ENCODE measurements at regions of chr12 and their contacts with region 1.

Region 1: DNA sequence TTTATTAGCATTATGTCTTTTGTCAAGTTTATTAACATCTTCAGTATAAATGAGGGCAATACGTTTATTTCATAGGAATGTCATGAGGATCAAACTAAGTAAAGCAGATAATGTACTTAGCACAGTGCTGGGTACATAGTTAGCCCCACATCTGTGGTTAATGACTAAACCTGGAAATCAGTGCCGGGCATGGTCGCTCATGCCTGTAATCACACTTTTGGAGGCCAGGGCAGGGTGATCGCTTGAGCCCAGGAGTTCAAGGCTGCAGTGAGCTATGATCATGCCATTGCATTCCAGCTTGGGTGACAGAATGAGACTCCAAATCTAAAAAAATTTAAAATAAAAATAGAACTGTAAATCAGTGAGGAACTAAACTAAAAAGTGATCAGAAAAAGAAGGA is 44.8 kb upstream of the GUCY2C start:
- DNase-seq: no peak
- H3K4me3 ChIP-seq: no peak overlapping the region
- H3K27me3 ChIP-seq: no peaks in the 10 kb centered on the region; the same call in 1 of the 2 replicates
- CTCF ChIP-seq: no peak

Region 2: DNA sequence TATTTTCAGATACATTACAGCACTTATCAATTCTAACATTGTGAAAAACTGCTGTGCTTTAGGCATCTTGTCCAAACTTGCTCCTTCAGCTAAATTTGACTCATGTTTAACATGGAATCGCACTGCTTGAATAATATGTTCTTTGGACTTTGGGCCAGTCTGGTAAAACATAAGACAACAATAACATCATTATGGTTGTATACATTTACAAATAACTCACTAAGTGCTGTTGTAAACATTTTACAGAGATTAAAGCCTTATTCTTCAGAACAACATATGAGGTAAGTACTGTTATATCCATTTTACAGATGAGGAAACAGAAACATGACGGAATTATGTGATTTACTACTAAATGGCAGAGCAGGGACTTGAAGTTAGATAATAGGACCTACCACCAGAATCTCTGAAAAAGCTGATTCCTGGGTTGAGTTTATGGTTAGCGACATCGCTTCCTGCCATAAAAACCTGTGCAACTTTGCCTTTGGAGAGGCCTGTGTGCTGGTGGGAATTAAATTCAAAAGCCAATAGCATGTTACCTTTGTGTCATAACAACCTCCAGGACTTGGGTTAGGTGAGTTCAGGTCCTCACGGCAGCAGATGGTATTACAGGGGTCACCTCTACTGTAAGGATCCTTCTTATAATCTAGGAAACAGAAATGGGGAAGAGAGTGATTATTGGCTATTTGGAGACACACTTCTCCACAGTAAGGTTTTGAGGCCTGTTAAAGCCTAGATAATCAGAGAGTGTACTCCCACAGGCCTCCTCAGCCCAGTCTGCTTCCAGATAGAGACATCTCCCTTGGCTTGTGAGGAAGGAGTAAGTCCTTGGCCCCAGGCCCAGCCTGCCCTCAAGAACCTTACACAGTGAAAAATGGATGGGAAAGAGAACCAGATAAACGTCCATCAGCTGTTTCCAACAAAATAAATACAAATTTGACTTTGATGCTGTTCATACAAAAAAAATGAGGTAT is 235.2 kb before region 1 on chr12:
- CTCF ChIA-PET with region 1: no interaction called
- POLR2A ChIA-PET with region 1: no interaction called
- DNase-seq: no peak
- H3K4me3 ChIP-seq: no peak overlapping the region
- H3K27me3 ChIP-seq: no peaks in the 10 kb centered on the region
- CTCF ChIP-seq: no peak

Region 3: DNA sequence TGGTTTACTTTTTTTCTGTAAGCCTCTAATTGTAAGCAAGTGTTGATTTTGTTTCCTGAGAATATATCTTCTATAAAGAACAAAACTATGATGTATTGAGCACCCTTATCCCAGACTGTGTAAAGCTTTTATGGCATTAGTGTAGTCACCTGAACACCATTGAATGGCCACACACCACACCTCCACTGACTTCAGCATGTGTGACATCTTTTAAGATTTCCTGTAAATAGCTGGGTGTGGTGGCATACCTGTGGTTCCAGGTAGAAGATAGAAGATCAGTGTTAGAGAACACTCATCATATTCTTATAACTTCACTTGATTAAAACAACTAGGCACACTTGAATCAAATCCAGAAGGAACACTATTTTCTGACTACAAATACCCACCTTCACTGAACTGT is 10.8 kb after region 1 on chr12:
- CTCF ChIA-PET with region 1: no interaction called
- POLR2A ChIA-PET with region 1: interaction called, 13 read pairs
- DNase-seq: no peak
- H3K4me3 ChIP-seq: no peak overlapping the region
- H3K27me3 ChIP-seq: no peaks in the 10 kb centered on the region
- CTCF ChIP-seq: no peak

Region 4: DNA sequence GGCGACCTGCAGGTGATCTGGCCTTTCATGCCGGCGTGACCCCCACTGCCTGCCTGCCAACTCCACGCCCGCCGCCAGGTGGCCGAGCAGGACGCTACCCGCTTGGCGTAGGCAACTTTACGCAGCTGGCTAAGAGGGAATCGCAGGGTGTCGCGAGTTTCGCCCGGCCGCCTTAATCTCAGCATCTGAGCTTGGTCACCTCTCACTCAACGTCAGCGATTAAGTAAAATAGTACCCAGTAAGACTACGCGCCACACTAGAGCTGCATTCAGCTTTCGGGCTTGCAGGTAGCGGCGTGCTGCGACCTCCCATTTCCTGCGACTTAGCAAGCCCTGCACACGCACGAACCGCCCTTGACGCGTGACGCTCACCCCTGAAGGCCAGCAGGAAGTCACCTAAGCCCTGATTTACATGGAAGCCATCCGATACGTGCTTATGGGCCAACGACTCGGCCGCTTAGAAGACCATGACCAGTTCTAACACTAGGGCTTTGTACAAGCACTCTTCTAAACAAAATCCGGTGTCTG is 28.9 kb after region 1 on chr12:
- CTCF ChIA-PET with region 1: no interaction called
- POLR2A ChIA-PET with region 1: no interaction called
- DNase-seq: no peak
- H3K4me3 ChIP-seq: peak overlapping the region; percentile 75
- H3K27me3 ChIP-seq: no peaks in the 10 kb centered on the region
- CTCF ChIP-seq: peak; percentile 86

Region 5: DNA sequence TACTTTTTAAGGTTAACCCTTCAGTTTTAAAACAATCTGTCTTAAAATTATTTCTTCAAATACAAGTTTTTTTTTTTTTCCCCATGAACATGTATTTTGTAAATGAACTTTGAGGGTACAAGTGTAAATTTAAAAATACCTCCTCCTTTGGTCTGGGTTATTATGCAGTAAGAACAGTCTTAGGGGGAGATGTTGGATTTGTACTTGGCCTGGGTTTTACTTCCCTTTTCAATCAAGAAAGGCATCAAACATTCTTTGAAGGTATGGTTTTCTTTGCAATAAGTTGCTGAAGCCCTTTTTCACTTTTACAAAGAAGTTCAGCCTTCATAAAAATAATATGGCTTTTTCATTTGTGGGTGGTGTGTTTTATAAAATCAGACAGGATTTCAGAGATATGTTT is 41.6 kb after region 1 on chr12:
- CTCF ChIA-PET with region 1: no interaction called
- POLR2A ChIA-PET with region 1: no interaction called
- DNase-seq: no peak
- H3K4me3 ChIP-seq: no peak overlapping the region
- H3K27me3 ChIP-seq: no peaks in the 10 kb centered on the region
- CTCF ChIP-seq: no peak